K562 (cell line): ENCODE measurements at regions of chr7 and their contacts with region 1.

Region 1: DNA sequence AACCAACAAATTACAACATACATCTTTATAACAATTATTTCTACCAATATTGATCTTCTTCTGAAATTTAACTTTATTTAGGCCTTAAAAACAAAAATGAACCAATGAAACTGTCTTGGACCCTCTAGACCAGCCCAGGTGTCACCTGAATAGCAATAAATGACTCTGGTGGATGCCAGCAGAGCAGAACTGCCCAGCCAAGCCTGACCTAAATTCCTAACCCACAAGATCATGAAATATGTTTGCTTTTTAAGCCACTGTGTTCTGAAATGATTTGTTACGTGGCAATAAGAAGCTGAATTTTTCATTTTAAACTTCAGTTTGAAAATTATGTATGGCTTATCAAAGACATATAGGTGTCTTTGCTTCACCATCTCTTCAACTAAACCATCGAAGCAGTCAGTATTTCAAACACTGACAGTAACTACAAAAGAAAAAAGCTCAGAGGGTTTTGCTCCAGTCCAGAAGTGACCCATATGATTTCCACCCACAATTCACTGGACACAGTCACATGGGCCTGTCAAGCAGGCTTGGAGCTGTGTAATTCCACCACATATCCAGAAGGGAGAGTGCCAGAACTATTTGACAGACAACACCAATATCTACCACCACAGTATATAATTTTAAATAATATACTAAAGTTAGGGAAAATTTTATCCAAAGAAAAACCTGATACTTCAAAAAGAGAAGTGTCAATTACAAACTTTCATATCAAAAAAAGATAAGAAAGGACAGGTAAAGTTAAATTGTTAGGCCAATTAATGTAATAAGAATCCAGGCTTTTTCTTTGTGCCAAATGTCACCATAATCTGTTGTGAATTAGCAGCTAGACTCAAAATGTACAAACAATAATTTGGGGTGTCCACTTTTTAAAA is 94.5 kb downstream of the KMT2C start:
- DNase-seq: peak in 3 of 4 experiments; percentile 35 to 84 (median 81)
- ATAC-seq: peak; percentile 99
- H3K4me3 ChIP-seq: no peak overlapping the region
- H3K27ac ChIP-seq: no peak overlapping the region
- H3K4me1 ChIP-seq: peaks cover 0 to 5% of the 10 kb centered on the region in 2 experiments; a peak in 2 of 5 replicates
- H3K27me3 ChIP-seq: no peaks in the 10 kb centered on the region
- CTCF ChIP-seq: peak; percentile 69 to 91 (median 75)
- EP300 ChIP-seq: no peak
- POLR2A ChIP-seq: no peak
- RAD21 ChIP-seq: peak; percentile 78 to 83

Region 2: DNA sequence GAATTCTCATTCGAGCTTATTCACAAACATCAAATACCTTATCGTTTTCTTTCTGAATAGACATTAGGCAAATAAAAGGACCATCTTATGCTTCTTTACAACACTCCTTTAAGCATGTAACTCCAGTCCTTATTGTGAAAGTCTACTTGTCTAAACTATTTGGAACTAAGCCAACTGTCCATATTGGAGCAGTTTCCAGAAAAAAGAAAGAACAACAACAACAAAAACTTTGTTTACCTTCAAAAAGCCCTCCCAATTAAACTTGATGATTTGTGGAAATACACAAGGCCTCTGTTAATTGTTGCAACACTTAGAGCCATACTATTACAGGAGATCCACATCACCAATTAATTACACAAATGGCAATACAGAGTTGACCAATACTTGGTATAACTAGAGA is 152.2 kb before region 1 on chr7:
- CTCF ChIA-PET with region 1: no interaction called
- POLR2A ChIA-PET with region 1: no interaction called
- in situ Hi-C with region 1: no loop called
- intact Hi-C with region 1: no loop called
- DNase-seq: no peak
- ATAC-seq: no peak
- H3K4me3 ChIP-seq: no peak overlapping the region
- H3K27ac ChIP-seq: no peak overlapping the region
- H3K4me1 ChIP-seq: no peaks in the 10 kb centered on the region
- H3K27me3 ChIP-seq: no peaks in the 10 kb centered on the region
- CTCF ChIP-seq: no peak
- EP300 ChIP-seq: no peak
- POLR2A ChIP-seq: no peak
- RAD21 ChIP-seq: no peak

Region 3: DNA sequence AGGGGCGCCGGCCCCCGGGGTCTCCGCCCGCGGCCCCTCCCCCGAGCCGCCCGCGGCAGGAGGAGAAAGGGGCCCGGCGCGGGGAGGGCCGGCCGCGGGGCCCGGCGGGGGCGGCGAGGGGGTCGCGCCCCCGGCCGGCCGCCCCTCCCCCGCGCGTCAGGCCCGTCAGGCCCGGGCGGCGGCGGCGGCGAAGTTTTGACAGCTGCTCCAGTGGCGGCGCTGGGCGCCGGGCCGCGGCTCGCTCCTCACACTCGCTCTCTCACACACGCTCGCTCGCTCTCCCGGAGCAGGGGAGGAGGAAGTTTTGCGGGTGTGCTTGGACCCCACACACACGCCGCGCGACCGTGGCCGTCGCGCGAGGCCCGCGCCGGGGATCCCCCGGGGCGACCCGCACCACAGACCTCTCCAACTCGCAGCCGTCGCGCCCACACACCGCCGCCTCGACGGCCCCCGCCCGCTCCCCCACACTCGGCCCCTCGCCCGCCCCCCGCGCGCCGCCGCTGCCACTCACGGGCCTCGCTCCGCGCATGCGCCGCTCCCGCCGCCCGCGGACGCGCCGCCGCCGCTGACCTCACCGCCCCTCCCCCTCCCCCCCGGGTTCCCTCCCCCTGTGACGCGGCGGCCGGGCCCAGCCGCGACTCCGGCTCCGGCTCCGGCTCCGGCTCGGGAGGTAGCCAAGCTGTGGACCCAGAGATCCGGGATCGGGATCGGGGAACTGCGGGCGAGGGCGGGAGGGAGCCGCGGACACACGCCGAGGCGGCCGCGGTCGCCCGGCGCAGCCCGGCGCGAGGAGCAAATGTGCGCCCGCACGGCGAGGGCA is 95.0 kb after region 1 on chr7:
- CTCF ChIA-PET with region 1: no interaction called
- POLR2A ChIA-PET with region 1: no interaction called
- in situ Hi-C with region 1: no loop called
- intact Hi-C with region 1: loop called (anchors 2 kb)
- DNase-seq: peak; percentile 97 to 98 (median 98)
- ATAC-seq: peak; percentile 63
- H3K4me3 ChIP-seq: peak overlapping the region; percentile 66
- H3K27ac ChIP-seq: peak overlapping the region; percentile 95
- H3K4me1 ChIP-seq: peaks cover 12 to 15% of the 10 kb centered on the region in 2 experiments; a peak in 3 of 5 replicates
- H3K27me3 ChIP-seq: no peaks in the 10 kb centered on the region
- CTCF ChIP-seq: peak in 2 of 3 experiments; percentile 12 to 24; a peak in 1 of 6 replicates
- EP300 ChIP-seq: peak; percentile 59
- POLR2A ChIP-seq: peak; percentile 88
- RAD21 ChIP-seq: peak; percentile 30 to 31; a peak in 3 of 4 replicates